ENCODE measurements at regions of chr14 and their contacts with region 1.

Region 1: DNA sequence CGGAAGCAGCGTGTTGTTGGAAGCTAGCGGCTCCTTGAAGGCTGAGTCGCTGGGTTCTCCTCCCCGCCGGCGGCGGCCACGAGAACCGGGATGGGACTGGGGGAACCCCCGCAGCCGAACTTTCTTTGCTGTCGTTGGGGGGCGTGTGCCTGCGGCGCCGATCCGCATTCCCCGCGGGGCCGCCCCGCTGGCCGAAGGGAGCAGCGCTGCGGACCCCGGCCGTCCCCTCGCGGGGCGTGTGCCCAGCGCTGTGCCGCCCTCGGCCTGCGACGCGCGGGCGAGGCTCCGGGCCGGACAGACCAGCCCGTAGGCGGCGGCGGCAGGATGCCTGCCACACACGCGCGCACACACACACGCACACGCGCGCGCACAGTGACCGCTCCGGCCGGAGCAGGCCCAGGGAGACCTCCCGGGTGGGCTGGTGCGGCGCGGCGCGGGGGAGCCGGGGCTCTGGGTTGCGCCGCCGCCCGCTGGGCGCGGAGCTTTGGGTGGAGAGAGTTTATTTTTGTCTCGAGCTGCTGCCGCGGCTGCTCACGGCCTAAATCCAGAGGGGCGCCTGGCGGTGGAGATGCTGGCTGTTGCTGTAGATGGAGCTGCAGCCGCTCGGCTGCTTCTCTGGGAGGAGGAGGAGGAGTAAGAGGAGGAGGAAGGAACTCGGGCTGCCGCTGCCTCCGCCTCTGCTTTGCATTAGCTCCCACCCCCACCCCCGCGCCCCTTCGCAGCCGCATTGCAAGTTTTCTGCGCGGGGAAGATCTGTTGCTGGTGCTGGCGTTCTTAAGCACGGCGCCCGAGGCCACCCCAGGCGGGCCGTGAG is at the start of gene SAMD4A:
- DNase-seq: peak in 1 of 2 experiments; percentile 75
- H3K4me3 ChIP-seq: peak within 1 kb of the TSS; percentile 62 to 84 (median 77)
- H3K27ac ChIP-seq: no peak within 1 kb of the TSS
- H3K4me1 ChIP-seq: peaks cover 2 to 9% (median 6%) of the 10 kb centered on the region in 4 experiments; a peak in 6 of 7 replicates
- H3K27me3 ChIP-seq: peaks cover 0 to 30% (median 11%) of the 10 kb centered on the region in 4 experiments; a peak in 4 of 7 replicates
- CTCF ChIP-seq: no peak
- EP300 ChIP-seq: no peak
- POLR2A ChIP-seq: no peak; a peak in 1 of 3 replicates
- RAD21 ChIP-seq: peak in 1 of 2 experiments; percentile 10; a peak in 1 of 4 replicates
- total RNA-seq, gene SAMD4A: 11.5 and 12.3 TPM in 2 replicates

Region 2: GRCh38 chr14:54462048-54462447 is 104.6 kb before region 1 on chr14:
- CTCF ChIA-PET with region 1: no interaction called
- POLR2A ChIA-PET with region 1: no interaction called
- DNase-seq: no peak
- H3K4me3 ChIP-seq: no peak overlapping the region
- H3K27ac ChIP-seq: no peak overlapping the region
- H3K4me1 ChIP-seq: no peaks in the 10 kb centered on the region
- H3K27me3 ChIP-seq: no peaks in the 10 kb centered on the region
- CTCF ChIP-seq: no peak
- EP300 ChIP-seq: no peak
- POLR2A ChIP-seq: no peak
- RAD21 ChIP-seq: no peak

Region 3: GRCh38 chr14:54498095-54498531 is 68.5 kb before region 1 on chr14:
- CTCF ChIA-PET with region 1: no interaction called
- POLR2A ChIA-PET with region 1: no interaction called
- DNase-seq: no peak
- H3K4me3 ChIP-seq: no peak overlapping the region
- H3K27ac ChIP-seq: no peak overlapping the region
- H3K4me1 ChIP-seq: no peaks in the 10 kb centered on the region; a peak in 1 of 7 replicates
- H3K27me3 ChIP-seq: no peaks in the 10 kb centered on the region
- CTCF ChIP-seq: no peak
- EP300 ChIP-seq: no peak
- POLR2A ChIP-seq: no peak
- RAD21 ChIP-seq: no peak

Region 4: GRCh38 chr14:54642801-54643697 is 76.4 kb after region 1 on chr14:
- CTCF ChIA-PET with region 1: interaction called, 27 read pairs
- POLR2A ChIA-PET with region 1: interaction called, 5 read pairs
- DNase-seq: peak in 1 of 2 experiments; percentile 44
- H3K4me3 ChIP-seq: no peak overlapping the region
- H3K27ac ChIP-seq: no peak overlapping the region
- H3K4me1 ChIP-seq: peaks cover 0 to 9% (median 6%) of the 10 kb centered on the region in 4 experiments; a peak in 3 of 7 replicates
- H3K27me3 ChIP-seq: no peaks in the 10 kb centered on the region
- CTCF ChIP-seq: peak in 2 of 3 experiments; percentile 20 to 46; a peak in 2 of 4 replicates
- EP300 ChIP-seq: no peak
- POLR2A ChIP-seq: no peak
- RAD21 ChIP-seq: peak; percentile 53 to 54

Region 5: GRCh38 chr14:54691525-54692283 is 125.1 kb after region 1 on chr14:
- CTCF ChIA-PET with region 1: interaction called, 108 read pairs
- POLR2A ChIA-PET with region 1: interaction called, 17 read pairs
- DNase-seq: peak; percentile 53 to 86
- H3K4me3 ChIP-seq: no peak overlapping the region
- H3K27ac ChIP-seq: no peak overlapping the region
- H3K4me1 ChIP-seq: peaks cover 0 to 6% (median 0%) of the 10 kb centered on the region in 4 experiments; a peak in 3 of 7 replicates
- H3K27me3 ChIP-seq: no peaks in the 10 kb centered on the region
- CTCF ChIP-seq: peak; percentile 92 to 98 (median 96)
- EP300 ChIP-seq: no peak
- POLR2A ChIP-seq: no peak
- RAD21 ChIP-seq: peak; percentile 95

Region 6: GRCh38 chr14:54722781-54723432 is 156.3 kb after region 1 on chr14:
- CTCF ChIA-PET with region 1: interaction called, 46 read pairs
- POLR2A ChIA-PET with region 1: interaction called, 3 read pairs
- DNase-seq: no peak
- H3K4me3 ChIP-seq: no peak overlapping the region
- H3K27ac ChIP-seq: no peak overlapping the region
- H3K4me1 ChIP-seq: peaks cover 0 to 5% (median 3%) of the 10 kb centered on the region in 4 experiments; a peak in 2 of 7 replicates
- H3K27me3 ChIP-seq: peaks cover 0 to 1% (median 0%) of the 10 kb centered on the region in 4 experiments; a peak in 1 of 7 replicates
- CTCF ChIP-seq: peak in 2 of 3 experiments; percentile 49 to 50; a peak in 3 of 4 replicates
- EP300 ChIP-seq: no peak
- POLR2A ChIP-seq: no peak
- RAD21 ChIP-seq: peak; percentile 62 to 65

Measured in H1 (cell line).